MCF 10A (cell line): ENCODE measurements at regions of chr4 and their contacts with region 1.

Region 1: GRCh38 chr4:8176547-8177399 is 18.2 kb upstream of the ABLIM2 start:
- DNase-seq: peak; percentile 74
- H3K4me3 Mint-ChIP-seq: no peak overlapping the region
- H3K27ac Mint-ChIP-seq: no peak overlapping the region
- H3K4me1 Mint-ChIP-seq: peaks cover 18% of the 10 kb centered on the region
- H3K27me3 Mint-ChIP-seq: no peaks in the 10 kb centered on the region
- CTCF ChIP-seq: peak; percentile 95

Region 2: DNA sequence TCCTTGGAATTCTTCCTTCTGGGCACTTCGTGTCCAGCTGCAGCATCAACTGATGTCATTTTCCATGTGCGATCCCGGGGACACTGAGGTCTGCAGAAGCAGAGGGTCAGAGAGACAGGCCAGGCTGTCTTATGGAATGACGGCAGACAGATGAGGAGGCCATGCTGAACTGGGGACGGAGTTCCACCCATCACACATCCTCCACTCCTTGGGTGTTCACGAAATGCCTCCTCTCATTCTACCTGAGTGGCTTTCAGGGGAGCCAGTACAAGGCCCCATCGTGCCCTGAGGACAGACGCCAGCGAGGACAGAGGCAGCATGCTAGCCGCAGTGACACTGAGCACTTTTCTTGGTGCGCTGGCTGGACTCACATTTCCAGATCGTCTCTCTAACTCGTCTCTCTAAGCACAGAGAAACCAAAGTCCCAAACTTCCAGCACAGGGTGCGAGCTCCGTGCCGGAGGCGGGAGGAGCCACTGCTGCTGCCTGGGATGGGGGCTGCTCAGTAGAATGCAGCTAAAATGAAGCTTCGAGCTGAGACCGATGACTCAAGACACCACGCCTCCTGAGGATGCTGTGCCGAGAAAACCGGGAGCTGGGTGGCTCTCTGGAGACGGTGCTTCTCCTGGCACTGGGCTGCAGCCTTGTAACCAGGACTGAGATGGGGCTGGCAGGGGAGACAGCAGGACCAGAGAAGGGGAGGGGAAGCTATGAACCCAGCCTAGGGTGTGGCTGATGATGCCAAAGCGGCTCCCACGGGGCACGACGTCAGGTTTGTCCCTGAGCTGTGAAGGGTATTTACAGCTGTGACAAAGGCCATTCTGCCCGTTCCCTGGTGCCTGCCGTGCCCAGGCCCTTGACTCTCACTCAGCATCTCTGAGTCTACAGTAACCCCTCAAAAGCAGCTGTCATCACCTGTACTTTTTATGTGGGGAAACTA is 26.4 kb before region 1 on chr4:
- CTCF ChIA-PET with region 1: no interaction called
- POLR2A ChIA-PET with region 1: no interaction called
- intact Hi-C with region 1: no loop called
- DNase-seq: no peak
- H3K4me3 Mint-ChIP-seq: no peak overlapping the region
- H3K27ac Mint-ChIP-seq: no peak overlapping the region
- H3K4me1 Mint-ChIP-seq: no peaks in the 10 kb centered on the region
- H3K27me3 Mint-ChIP-seq: peaks cover 20% of the 10 kb centered on the region
- CTCF ChIP-seq: no peak

Region 3: GRCh38 chr4:8192748-8193738 is 16.3 kb after region 1 on chr4:
- CTCF ChIA-PET with region 1: interaction called, 185 read pairs
- POLR2A ChIA-PET with region 1: interaction called, 18 read pairs
- intact Hi-C with region 1: loop called (anchors 1 kb)
- DNase-seq: peak; percentile 76
- H3K4me3 Mint-ChIP-seq: no peak overlapping the region
- H3K27ac Mint-ChIP-seq: no peak overlapping the region
- H3K4me1 Mint-ChIP-seq: peaks cover 30% of the 10 kb centered on the region
- H3K27me3 Mint-ChIP-seq: no peaks in the 10 kb centered on the region
- CTCF ChIP-seq: peak; percentile 44

Region 4: GRCh38 chr4:8215001-8215427 is 38.2 kb after region 1 on chr4:
- CTCF ChIA-PET with region 1: interaction called, 34 read pairs
- POLR2A ChIA-PET with region 1: interaction called, 3 read pairs
- intact Hi-C with region 1: no loop called
- DNase-seq: peak; percentile 96
- H3K4me3 Mint-ChIP-seq: no peak overlapping the region
- H3K27ac Mint-ChIP-seq: peak overlapping the region; percentile 39
- H3K4me1 Mint-ChIP-seq: peaks cover 9% of the 10 kb centered on the region
- H3K27me3 Mint-ChIP-seq: no peaks in the 10 kb centered on the region
- CTCF ChIP-seq: no peak

Region 5: DNA sequence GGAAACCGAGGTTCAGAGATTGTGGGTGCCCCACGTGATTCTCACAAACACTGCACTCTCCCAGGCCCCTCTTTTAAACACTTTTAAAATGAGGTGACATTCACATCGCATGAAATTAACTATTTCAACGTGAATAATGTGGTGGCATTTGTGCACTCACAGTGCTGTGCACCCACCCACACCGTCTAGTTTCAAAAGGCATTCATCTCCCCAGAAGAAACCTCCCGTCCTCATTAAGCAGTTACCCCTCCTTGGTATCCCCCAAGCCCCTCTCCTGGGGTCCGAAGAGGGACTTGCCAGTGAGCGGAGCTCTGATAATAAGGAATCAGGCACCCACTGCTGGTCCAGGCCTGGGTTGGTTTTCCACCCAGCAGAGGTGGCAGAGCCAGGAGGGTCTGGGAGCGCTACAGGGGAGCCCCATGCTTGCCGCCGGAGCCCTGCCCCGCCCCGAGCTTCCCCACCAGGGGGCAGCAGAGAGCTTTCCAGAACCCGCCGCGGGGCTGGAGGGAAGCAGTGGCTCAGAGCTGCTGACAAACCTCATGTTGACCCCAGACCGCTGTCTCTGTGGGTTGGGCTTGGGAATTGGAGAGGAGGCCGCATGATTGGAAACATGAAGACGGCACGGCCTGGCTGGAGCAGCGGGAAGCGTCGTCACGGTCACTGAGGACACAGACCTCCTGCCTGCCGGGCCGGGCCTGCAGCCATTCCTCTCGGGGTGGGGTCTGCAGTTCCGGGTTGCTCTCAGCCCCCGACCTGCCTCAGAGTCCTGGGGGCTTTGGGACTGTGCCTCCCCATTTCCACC is 65.3 kb after region 1 on chr4:
- CTCF ChIA-PET with region 1: interaction called, 6 read pairs
- POLR2A ChIA-PET with region 1: interaction called, 3 read pairs
- intact Hi-C with region 1: loop called (anchors 2 kb)
- DNase-seq: peak; percentile 72
- H3K4me3 Mint-ChIP-seq: no peak overlapping the region
- H3K27ac Mint-ChIP-seq: no peak overlapping the region
- H3K4me1 Mint-ChIP-seq: no peaks in the 10 kb centered on the region
- H3K27me3 Mint-ChIP-seq: no peaks in the 10 kb centered on the region
- CTCF ChIP-seq: peak; percentile 96

Region 6: GRCh38 chr4:8351931-8352367 is 175.2 kb after region 1 on chr4:
- CTCF ChIA-PET with region 1: no interaction called
- POLR2A ChIA-PET with region 1: no interaction called
- intact Hi-C with region 1: no loop called
- DNase-seq: no peak
- H3K4me3 Mint-ChIP-seq: no peak overlapping the region
- H3K27ac Mint-ChIP-seq: no peak overlapping the region
- H3K4me1 Mint-ChIP-seq: peaks cover 17% of the 10 kb centered on the region
- H3K27me3 Mint-ChIP-seq: no peaks in the 10 kb centered on the region
- CTCF ChIP-seq: no peak

Region 7: GRCh38 chr4:8409264-8410065 is 232.7 kb after region 1 on chr4:
- CTCF ChIA-PET with region 1: interaction called, 7 read pairs
- POLR2A ChIA-PET with region 1: no interaction called
- intact Hi-C with region 1: loop called (anchors 2 kb)
- DNase-seq: no peak
- H3K4me3 Mint-ChIP-seq: no peak overlapping the region
- H3K27ac Mint-ChIP-seq: no peak overlapping the region
- H3K4me1 Mint-ChIP-seq: peaks cover 6% of the 10 kb centered on the region
- H3K27me3 Mint-ChIP-seq: no peaks in the 10 kb centered on the region
- CTCF ChIP-seq: no peak